ENCODE measurements at regions of chr10 and their contacts with region 1.

Region 1: DNA sequence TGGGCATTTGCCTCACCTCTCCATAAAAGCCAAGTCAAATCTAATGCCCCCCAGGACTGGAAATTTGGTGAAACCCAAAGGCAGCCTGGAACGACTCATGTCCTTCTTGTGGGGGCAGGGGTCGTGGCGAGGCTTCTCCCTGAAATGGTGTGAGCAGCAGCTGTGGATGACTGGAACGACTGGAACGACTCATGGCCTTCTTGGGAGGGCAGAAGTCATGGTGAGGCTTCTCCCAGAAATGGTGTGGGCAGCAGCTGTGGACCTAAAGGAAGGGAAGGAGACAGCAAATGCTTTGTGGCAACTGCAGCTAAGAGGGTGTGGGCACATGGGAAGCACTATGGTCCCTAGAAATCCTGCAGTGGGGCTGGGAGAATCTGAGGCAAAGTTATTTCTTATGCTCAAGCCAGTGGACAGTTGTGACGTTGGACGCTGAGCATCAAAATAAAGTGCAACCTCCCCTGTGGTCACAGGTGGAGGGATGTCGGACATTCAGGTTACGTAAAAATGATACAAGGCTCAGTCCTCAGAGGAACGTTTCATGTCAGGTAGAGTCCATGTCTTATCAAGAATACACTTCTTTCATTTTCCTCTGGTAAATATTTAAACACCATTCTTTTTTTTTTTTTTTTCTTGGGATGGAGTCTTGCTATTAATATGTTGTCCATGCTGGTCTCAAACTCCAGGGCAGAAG is 107.0 kb upstream of the KIF5B start:
- DNase-seq: no peak
- ATAC-seq: no peak

Region 2: GRCh38 chr10:30619966-30620365 is 1543.2 kb before region 1 on chr10:
- intact Hi-C with region 1: loop called (anchors 10 kb)
- DNase-seq: no peak
- ATAC-seq: no peak